ENCODE measurements at regions of chr12 and their contacts with region 1.

Region 1: GRCh38 chr12:124680863-124681778 is 113.7 kb upstream of the NCOR2 start:
- DNase-seq: no peak
- H3K4me3 ChIP-seq: no peak overlapping the region
- H3K27ac ChIP-seq: peak overlapping the region; percentile 87 to 93 (median 88)
- H3K4me1 ChIP-seq: peaks cover 0 to 92% (median 76%) of the 10 kb centered on the region in 4 donors
- H3K27me3 ChIP-seq: no peaks in the 10 kb centered on the region
- CTCF ChIP-seq: peak in 1 of 4 experiments; percentile 11
- EP300 ChIP-seq: peak in 1 of 4 donors; percentile 25
- POLR2A ChIP-seq: no peak

Region 2: GRCh38 chr12:124745891-124746570 is 64.9 kb after region 1 on chr12:
- intact Hi-C with region 1: loop called (anchors 5 kb)
- DNase-seq: peak; percentile 98
- H3K4me3 ChIP-seq: peak overlapping the region in 2 of 4 donors; percentile 23 to 30
- H3K27ac ChIP-seq: peak overlapping the region; percentile 87 to 95 (median 92)
- H3K4me1 ChIP-seq: peaks cover 0 to 76% (median 70%) of the 10 kb centered on the region in 4 donors
- H3K27me3 ChIP-seq: no peaks in the 10 kb centered on the region
- CTCF ChIP-seq: no peak
- EP300 ChIP-seq: peak in 3 of 4 donors; percentile 66 to 84 (median 73)
- POLR2A ChIP-seq: no peak

Measured in sigmoid colon (tissue), 7 donors.